Activated naive CD4-positive, alpha-beta T cell treated with anti-CD3 and anti-CD28 coated beads for 36 hours (primary cell): ENCODE measurements at regions of chr9 and their contacts with region 1.

Region 1: DNA sequence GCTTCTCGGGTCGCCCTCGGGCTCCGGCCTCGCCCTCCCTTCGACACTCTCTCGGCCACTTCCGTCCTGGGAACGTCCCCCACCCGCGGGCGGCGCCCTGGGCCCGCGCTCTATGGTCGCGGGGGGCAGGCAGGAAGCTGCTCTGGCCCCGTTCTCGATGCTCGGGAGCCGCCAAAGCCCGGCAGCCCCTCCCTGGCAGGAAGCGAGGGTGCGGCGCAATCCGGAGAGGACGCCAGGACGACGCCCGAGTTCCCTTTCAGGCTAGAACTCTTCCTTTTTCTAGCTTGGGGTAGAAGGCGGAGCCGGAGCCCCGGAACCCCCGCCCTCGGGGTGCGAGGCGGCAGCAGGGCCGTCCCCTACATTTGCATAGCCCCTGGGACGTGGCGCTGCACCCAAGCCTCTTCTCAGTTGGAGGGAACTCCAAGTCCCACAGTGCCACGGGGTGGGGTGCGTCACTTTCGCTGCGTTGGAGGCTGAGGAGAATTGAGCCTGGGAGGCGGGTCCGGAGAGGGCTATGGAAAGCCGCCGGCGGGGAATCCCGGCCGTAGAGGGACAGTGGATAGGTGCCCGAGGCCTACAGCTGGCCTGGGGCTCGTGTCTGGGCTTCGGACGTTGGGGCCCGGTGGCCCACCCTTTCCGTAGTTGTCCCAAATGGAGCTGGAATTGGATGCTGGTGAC is at the starts of genes CREB3 and TLN1:
- DNase-seq: peak; percentile 98
- H3K4me3 Mint-ChIP-seq: peak within 1 kb of the TSS; percentile 84
- H3K27ac Mint-ChIP-seq: peak within 1 kb of the TSS; percentile 90
- H3K4me1 Mint-ChIP-seq: peaks cover 16% of the 10 kb centered on the region
- H3K27me3 Mint-ChIP-seq: no peaks in the 10 kb centered on the region
- total RNA-seq, gene CREB3: 13.7 to 13.8 TPM
- total RNA-seq, gene TLN1: 190 TPM

Region 2: DNA sequence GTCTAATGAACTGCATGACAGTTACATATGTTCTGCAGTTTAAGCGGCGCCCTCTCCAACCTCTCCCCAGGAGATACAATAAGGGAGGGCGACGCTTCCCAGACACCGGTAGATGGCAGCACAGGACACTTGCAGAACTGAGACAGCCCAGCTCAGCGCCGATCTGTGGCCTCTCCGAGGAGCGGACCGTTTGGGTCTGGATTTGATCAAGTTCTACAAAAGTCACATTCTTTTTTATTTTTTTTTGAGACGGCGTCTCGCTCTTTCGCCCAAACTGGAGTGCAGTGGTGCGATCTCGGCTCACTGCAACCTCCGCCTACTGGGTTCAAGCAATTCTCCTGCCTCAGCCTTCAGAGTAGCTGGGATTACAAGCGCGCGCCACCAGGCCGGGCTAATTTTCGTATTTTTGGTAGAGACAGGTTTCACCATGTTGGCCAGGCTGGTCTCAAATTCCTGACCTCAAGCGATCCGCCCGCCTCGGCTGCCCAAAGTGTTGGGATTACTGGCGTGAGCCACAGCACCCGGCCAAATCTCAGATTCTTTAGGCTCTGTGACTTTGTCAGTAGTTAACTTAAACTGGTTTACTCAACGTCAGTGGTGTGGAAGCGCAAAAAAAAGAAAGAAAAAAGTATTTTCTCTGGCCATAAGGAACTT is 615.2 kb before region 1 on chr9:
- CTCF ChIA-PET with region 1: interaction called, 3 read pairs
- intact Hi-C with region 1: loop called (anchors 1 kb)
- DNase-seq: peak; percentile 94
- H3K4me3 Mint-ChIP-seq: peak overlapping the region; percentile 89
- H3K27ac Mint-ChIP-seq: peak overlapping the region; percentile 80
- H3K4me1 Mint-ChIP-seq: peaks cover 38% of the 10 kb centered on the region
- H3K27me3 Mint-ChIP-seq: no peaks in the 10 kb centered on the region

Region 3: GRCh38 chr9:35563791-35564197 is 168.5 kb before region 1 on chr9:
- CTCF ChIA-PET with region 1: no interaction called
- intact Hi-C with region 1: no loop called
- DNase-seq: no peak
- H3K4me3 Mint-ChIP-seq: no peak overlapping the region
- H3K27ac Mint-ChIP-seq: no peak overlapping the region
- H3K4me1 Mint-ChIP-seq: peaks cover 7% of the 10 kb centered on the region
- H3K27me3 Mint-ChIP-seq: no peaks in the 10 kb centered on the region

Region 4: GRCh38 chr9:35657546-35658136 is 74.6 kb before region 1 on chr9 and contains the start of gene RMRP:
- CTCF ChIA-PET with region 1: interaction called, 35 read pairs
- intact Hi-C with region 1: loop called (anchors 1 kb)
- DNase-seq: peak; percentile 93
- H3K4me3 Mint-ChIP-seq: peak within 1 kb of the TSS; percentile 84
- H3K27ac Mint-ChIP-seq: peak within 1 kb of the TSS; percentile 94
- H3K4me1 Mint-ChIP-seq: peaks cover 60% of the 10 kb centered on the region
- H3K27me3 Mint-ChIP-seq: peaks cover 3% of the 10 kb centered on the region
- total RNA-seq, gene RMRP: 7,381 to 12,571 TPM

Region 5: DNA sequence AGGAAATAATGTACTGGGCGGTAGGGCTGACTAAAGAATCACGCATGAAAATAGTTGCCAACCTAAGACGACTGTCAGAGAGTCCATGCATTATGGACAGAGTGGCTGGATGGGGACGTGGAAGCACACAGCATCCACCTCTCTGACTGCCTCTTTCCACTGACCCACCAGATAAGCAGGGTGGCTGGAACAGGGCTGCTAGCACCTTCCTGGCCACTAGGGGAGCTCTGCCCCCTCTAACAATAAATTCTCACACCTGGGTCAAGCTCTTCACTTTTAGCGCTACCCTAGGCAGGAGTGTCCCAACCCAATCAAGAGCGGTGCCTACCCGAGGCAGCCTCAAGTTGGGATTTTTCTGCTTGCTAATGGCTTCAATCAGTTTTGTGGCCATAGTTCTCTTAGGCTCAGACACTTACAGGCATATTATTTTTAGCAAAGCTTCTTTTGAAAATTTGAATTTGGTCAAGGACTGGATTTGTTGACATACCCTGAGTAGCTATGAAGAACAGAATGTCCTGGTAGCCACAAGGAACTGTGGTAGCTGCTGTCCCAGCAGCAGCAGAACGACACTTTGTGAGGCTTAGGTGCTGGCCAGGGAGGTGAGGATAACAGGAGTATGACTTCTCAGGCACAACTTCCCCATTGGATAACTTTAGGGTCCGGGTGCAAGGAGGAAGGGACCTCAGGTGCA is 35.6 kb before region 1 on chr9:
- CTCF ChIA-PET with region 1: interaction called, 68 read pairs
- intact Hi-C with region 1: no loop called
- DNase-seq: peak; percentile 70
- H3K4me3 Mint-ChIP-seq: no peak overlapping the region
- H3K27ac Mint-ChIP-seq: peak overlapping the region; percentile 51
- H3K4me1 Mint-ChIP-seq: peaks cover 1% of the 10 kb centered on the region
- H3K27me3 Mint-ChIP-seq: no peaks in the 10 kb centered on the region

Region 6: DNA sequence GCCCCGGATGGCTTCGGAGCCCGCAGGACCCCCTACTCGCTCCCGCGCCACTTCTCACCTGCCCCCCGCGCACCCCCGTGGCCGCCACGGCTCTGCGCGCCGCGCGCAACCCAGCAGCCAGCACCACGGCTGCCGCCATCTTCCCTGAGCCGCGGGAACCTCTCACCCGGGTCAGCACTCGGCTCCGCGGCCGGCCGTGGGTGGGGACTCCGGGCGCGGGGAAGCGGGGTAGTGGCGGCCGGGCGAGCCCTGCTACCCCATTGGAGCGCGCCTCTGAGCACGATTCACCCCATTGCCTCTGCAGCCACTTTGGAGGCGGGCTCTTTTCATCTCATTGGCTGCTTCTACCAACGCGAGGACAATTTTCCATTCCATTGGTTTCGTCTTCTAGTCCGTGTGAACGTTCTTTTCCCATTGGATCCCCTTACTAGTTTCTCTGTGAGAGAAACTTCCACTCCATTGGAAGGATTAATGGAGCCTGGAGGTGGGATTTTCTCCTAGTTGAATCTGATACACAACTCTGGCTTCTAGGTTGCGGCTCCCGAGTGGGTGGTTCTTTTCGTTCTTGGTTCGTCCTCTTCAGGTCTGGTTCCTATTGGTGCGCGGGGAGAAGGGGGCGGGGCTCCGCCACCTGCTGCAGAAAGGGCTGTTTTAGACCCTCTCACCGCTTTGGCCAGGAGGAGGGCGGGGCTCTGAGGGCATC is 82.7 kb after region 1 on chr9 and contains the start of gene HINT2:
- CTCF ChIA-PET with region 1: interaction called, 4 read pairs
- intact Hi-C with region 1: loop called (anchors 1 kb)
- DNase-seq: peak; percentile 98
- H3K4me3 Mint-ChIP-seq: peak within 1 kb of the TSS; percentile 92
- H3K27ac Mint-ChIP-seq: peak within 1 kb of the TSS; percentile 97
- H3K4me1 Mint-ChIP-seq: peaks cover 28% of the 10 kb centered on the region
- H3K27me3 Mint-ChIP-seq: no peaks in the 10 kb centered on the region
- total RNA-seq, gene HINT2: 61.0 to 68.3 TPM

Region 7: GRCh38 chr9:36190388-36191287 is 458.4 kb after region 1 on chr9 and contains the start of gene CLTA:
- CTCF ChIA-PET with region 1: no interaction called
- intact Hi-C with region 1: no loop called
- DNase-seq: peak; percentile 98
- H3K4me3 Mint-ChIP-seq: peak within 1 kb of the TSS; percentile 84
- H3K27ac Mint-ChIP-seq: peak within 1 kb of the TSS; percentile 84
- H3K4me1 Mint-ChIP-seq: peaks cover 42% of the 10 kb centered on the region
- H3K27me3 Mint-ChIP-seq: no peaks in the 10 kb centered on the region
- total RNA-seq, gene CLTA: 96.4 to 101 TPM